Left cardiac atrium (tissue), 4 donors: ENCODE measurements at regions of chr11 and their contacts with region 1.

Region 1: GRCh38 chr11:11577251-11577855 is 44.5 kb downstream of the GALNT18 start:
- DNase-seq: peak; percentile 41
- ATAC-seq: peak in 1 of 2 donors; percentile 45

Region 2: DNA sequence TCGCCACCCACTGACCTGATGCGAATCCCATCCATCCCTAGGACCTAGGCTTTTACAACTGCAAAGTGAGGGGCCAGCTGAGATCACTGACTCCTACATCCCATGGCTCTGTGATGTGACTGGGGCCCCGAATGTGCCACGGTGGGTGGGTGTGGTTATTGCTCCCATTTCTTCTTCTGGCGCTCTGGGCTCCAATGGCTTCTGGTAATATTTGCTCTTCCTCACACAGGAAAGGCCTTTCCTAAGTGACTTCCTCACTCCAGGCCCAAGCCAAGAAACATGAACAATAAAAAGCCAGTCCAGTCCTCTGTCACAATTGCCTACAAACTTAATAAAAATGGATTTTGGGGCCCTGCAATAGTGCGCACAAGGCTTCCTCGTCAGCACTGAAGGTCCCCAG is 33.7 kb before region 1 on chr11:
- intact Hi-C with region 1: loop called in 1 of 2 experiments (anchors 5 kb)
- DNase-seq: no peak
- ATAC-seq: peak; percentile 20 to 40